ENCODE measurements at regions of chr11 and their contacts with region 1.

Region 1: GRCh38 chr11:73184953-73185671 is 33.0 kb upstream of the P2RY2 start:
- DNase-seq: peak; percentile 76 to 91
- ATAC-seq: peak; percentile 84 to 93
- H3K4me3 ChIP-seq: no peak overlapping the region
- H3K27ac ChIP-seq: peak overlapping the region; percentile 74 to 84
- H3K4me1 ChIP-seq: peaks cover 29% of the 10 kb centered on the region
- CTCF ChIP-seq: peak; percentile 80
- EP300 ChIP-seq: no peak
- POLR2A ChIP-seq: no peak
- RAD21 ChIP-seq: peak; percentile 79 to 90

Region 2: GRCh38 chr11:72831513-72832300 is 353.4 kb before region 1 on chr11:
- CTCF ChIA-PET with region 1: interaction called, 339 read pairs
- POLR2A ChIA-PET with region 1: no interaction called
- DNase-seq: peak; percentile 74 to 77
- ATAC-seq: peak; percentile 93 to 96
- H3K4me3 ChIP-seq: no peak overlapping the region
- H3K27ac ChIP-seq: peak overlapping the region; percentile 32 to 75; a peak in 4 of 6 replicates
- H3K4me1 ChIP-seq: peaks cover 4% of the 10 kb centered on the region; the same call in 2 of the 3 replicates
- CTCF ChIP-seq: peak; percentile 90
- EP300 ChIP-seq: no peak
- POLR2A ChIP-seq: no peak
- RAD21 ChIP-seq: peak; percentile 95 to 97

Region 3: GRCh38 chr11:72951193-72951592 is 233.9 kb before region 1 on chr11:
- CTCF ChIA-PET with region 1: no interaction called
- POLR2A ChIA-PET with region 1: no interaction called
- DNase-seq: peak in 1 of 2 experiments; percentile 22
- ATAC-seq: peak in 1 of 2 experiments; percentile 24; a peak in 1 of 6 replicates
- H3K4me3 ChIP-seq: no peak overlapping the region
- H3K27ac ChIP-seq: no peak overlapping the region
- H3K4me1 ChIP-seq: peaks cover 11% of the 10 kb centered on the region; the same call in 2 of the 3 replicates
- CTCF ChIP-seq: no peak
- EP300 ChIP-seq: no peak
- POLR2A ChIP-seq: no peak
- RAD21 ChIP-seq: no peak

Region 4: GRCh38 chr11:73164803-73165540 is 20.1 kb before region 1 on chr11:
- CTCF ChIA-PET with region 1: interaction called, 12 read pairs
- POLR2A ChIA-PET with region 1: no interaction called
- DNase-seq: no peak
- ATAC-seq: no peak
- H3K4me3 ChIP-seq: no peak overlapping the region
- H3K27ac ChIP-seq: no peak overlapping the region
- H3K4me1 ChIP-seq: no peaks in the 10 kb centered on the region
- CTCF ChIP-seq: no peak
- EP300 ChIP-seq: no peak
- POLR2A ChIP-seq: no peak
- RAD21 ChIP-seq: no peak

Region 5: DNA sequence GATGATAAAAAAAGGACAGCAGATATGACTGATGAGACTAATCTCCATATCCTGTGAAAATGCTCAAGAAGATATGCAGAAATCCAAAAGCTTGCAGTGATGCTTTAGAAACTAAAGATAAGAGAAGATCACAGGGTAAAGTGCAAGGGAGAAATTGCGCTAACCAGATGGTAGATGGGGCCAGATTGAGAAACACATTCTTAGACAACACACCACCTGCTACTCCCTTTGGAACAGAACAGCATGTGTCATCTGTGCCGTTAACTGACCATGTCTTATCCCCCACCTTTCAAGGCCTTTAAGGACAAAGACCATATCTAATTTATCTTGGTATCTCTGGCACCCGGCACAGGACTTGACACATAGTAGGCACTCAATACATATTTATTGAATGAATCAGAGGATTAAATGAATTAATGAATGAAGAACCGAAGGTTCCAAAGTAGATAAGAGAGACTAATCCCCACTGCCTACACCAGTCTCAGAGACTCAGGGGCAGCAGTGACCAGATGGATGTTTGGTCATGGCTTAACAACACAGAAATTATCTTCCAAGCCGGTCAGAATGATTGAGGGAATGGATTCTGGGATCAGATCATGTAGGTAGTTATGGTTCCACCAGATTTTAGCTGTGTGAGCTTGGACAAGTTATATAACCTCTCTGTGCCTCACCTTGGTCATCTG is 20.7 kb after region 1 on chr11:
- CTCF ChIA-PET with region 1: interaction called, 11 read pairs
- POLR2A ChIA-PET with region 1: no interaction called
- DNase-seq: no peak
- ATAC-seq: peak; percentile 34 to 49; a peak in 3 of 6 replicates
- H3K4me3 ChIP-seq: no peak overlapping the region
- H3K27ac ChIP-seq: peak overlapping the region in 1 of 2 experiments; percentile 59; a peak in 2 of 6 replicates
- H3K4me1 ChIP-seq: peaks cover 27% of the 10 kb centered on the region
- CTCF ChIP-seq: no peak
- EP300 ChIP-seq: no peak
- POLR2A ChIP-seq: no peak
- RAD21 ChIP-seq: no peak

Region 6: DNA sequence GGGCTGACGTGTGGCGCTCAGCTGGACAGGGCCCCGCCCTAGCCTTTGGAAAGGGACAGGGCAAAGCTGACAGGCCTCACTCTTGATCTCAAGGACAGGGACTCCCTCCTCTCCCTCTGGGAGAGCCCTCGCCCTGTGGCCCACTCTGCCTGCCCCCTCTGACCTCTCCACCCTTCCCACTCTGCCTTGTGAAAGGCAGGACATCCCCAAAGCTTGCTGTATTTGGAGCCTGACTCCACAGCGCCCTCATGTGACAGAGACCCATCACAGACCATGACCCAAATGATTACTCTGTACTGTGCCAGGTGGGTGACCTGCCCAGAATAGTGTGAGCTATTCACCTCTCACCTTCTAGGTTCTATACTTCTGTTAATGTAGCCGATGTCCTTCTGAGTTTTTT is 51.7 kb after region 1 on chr11:
- CTCF ChIA-PET with region 1: interaction called, 80 read pairs
- POLR2A ChIA-PET with region 1: no interaction called
- DNase-seq: peak; percentile 63 to 69
- ATAC-seq: peak; percentile 46 to 80; a peak in 4 of 6 replicates
- H3K4me3 ChIP-seq: no peak overlapping the region
- H3K27ac ChIP-seq: no peak overlapping the region
- H3K4me1 ChIP-seq: peaks cover 13% of the 10 kb centered on the region; the same call in 2 of the 3 replicates
- CTCF ChIP-seq: peak; percentile 52
- EP300 ChIP-seq: no peak
- POLR2A ChIP-seq: no peak
- RAD21 ChIP-seq: peak; percentile 46 to 72

Region 7: DNA sequence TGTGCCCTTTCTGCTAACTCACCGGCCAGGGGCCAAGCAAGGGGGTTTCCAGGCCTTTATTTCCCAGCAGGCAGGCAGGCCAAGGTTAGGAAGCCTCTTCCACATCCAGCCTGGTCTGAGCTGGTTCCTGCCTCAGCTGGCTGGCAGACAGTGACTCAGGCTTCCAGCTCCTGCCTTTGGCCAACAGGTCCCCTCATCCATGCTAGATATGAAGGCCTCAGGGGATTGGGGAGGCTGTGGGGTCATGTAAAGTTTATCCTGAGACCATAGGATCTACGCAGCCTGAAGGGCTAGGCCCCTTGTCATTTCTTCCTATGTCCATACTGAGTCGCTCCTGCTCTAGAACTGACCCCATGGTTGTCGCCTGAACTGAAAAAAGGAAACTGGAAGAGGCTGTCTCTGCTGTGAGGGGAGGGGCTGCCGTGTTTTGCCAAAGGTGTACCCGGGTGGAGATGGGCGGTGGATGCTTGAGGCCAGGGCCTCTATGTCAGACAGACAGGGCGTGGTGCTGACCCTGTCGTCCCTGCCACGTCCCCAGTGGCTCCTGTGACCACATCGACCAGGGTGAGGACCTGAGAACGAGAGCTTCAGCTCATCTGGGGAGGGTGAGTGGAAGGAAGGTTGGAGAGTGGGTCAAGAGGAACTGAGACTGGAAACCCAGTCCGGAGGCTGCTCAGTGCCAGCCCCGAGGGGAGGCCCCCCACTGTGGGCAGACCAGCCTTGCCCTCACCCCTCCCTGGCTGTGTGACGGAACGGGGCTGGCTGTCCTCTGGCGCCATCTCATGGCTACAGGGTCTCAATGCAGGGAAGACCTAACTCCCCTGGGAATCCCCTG is 104.0 kb after region 1 on chr11:
- CTCF ChIA-PET with region 1: interaction called, 179 read pairs
- POLR2A ChIA-PET with region 1: no interaction called
- DNase-seq: peak; percentile 86 to 91
- ATAC-seq: peak; percentile 72 to 84
- H3K4me3 ChIP-seq: peak overlapping the region; percentile 20; the same call in 1 of the 3 replicates
- H3K27ac ChIP-seq: peak overlapping the region; percentile 80 to 90
- H3K4me1 ChIP-seq: peaks cover 36% of the 10 kb centered on the region
- CTCF ChIP-seq: peak; percentile 96
- EP300 ChIP-seq: no peak
- POLR2A ChIP-seq: no peak
- RAD21 ChIP-seq: peak; percentile 98